ENCODE measurements at regions of chr17 and their contacts with region 1.

Region 1: DNA sequence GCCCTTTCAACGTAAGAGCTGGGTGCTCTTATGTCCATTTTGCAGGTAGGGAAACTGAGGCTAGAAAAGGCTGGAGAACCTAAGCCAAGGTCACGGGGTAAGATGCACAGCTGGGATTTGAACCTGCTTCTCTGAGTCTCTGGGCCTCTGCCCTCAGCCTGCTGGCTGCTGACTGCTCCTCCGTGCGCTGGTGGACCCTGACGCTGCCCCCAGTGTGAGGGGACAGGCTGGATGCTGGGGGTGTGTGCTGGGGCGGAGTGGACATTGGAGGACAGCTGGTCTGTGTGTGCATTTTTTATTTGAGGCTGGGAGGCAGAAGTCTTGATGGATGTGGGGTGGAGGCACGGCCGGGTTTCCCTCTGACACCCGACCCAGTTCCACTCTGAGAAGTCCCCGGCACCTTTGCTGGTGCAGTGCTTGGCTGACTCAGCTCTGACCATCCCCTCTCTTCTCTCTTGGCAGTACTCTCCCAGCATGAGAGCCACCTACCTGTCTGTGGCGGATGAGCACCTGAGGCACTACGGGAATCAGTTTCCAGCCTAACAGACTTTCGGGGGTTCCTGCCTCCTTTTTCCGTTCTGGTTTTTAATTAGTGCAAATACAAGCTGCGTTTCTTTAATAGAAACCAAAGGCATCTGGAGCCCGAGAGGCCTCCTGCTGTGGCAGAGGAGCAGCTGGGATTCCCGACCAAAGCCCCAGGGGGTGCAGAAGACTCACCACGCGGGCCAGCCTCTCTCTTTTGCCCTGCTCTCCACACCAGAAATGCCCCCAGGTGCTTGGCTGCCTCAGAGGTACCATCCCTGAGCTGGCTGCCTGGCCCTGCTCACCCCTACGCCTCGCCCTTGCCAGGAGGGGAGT is 14.1 kb upstream of the DNAI2 start:
- DNase-seq: no peak
- H3K4me3 ChIP-seq: no peak overlapping the region
- CTCF ChIP-seq: no peak

Region 2: DNA sequence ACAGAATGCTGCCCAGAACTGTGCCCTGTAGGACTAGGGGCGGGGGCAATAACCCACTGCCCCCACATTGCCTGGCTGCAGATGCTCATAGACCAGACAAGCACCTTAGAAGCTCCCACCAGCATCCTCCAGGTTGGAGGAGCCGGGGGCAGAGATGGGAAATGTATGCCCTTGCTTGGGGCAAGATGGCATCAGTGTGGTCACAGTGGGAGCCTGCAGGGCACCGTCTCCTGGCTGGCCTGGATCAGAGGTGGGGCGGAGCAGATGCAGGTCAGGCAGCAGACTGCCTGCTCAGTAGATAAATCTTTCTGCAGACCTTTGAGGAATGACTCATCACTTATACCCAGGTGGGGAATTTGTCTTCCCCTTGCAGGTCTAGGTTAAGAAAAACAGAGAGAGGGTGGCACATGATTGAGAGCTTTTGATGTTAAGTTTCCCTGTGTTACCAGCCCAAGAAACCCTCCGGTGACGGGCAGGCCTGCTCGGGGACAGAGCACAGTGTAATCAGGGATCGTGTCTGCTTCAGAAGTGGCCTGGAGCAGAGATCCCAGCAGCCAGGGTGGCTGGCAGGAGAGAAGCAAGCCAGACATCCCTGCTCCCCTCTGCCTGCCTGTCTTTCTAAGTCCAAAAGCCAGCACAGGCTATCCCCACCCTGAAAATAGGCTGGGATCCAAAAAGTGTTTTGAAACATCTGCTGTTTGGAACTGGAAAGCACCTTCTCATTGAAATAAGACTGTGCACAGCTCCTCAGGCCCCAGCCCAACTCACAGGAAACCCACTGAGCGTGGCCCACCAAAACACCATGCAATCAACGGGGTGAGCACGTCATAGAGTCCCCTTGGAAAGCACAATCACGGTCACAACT is 107.1 kb before region 1 on chr17:
- in situ Hi-C with region 1: no loop called
- DNase-seq: no peak
- H3K4me3 ChIP-seq: no peak overlapping the region
- CTCF ChIP-seq: no peak

Region 3: DNA sequence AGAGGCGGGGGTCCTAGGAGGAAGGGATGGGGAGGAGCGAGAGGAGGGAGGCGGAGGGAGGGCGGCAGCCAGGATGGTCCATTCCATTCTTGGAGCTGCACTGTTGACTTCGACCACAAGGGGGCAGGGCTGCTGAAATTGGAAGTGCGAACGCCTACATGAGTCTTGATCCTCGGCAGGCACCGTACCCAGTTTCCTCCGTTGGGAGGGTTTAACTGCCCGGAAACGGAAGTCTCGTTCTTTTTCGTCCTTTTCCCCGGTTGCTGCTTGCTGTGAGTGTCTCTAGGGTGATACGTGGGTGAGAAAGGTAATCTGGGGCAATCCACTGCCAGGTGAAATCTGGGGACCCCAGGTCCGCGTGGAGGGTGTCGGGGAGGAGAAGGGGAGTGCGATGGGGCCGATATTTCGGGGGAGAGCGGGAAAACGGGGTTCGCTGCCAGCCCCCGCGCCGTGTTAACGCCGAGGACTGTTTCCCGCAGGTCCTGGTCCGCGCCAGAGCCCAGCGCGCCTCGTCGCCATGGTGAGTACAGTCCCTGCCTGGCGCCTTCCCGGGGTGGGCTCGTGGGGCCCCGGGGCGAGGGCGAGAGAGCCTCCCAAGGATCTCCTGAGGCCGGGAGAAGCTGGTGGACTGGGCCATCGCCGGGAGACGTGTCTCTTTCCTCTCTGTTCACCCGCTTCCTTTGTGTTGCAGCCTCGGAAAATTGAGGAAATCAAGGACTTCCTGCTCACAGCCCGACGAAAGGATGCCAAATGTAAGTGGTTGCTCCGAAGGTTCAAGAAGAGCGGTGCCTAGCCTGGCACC is 56.3 kb before region 1 on chr17 and contains the start of gene RPL38:
- in situ Hi-C with region 1: no loop called
- DNase-seq: peak; percentile 97
- H3K4me3 ChIP-seq: peak within 1 kb of the TSS; percentile 97
- CTCF ChIP-seq: peak; percentile 95

Region 4: GRCh38 chr17:74303305-74303704 is 43.4 kb after region 1 on chr17:
- in situ Hi-C with region 1: loop called (anchors 5 kb)
- DNase-seq: no peak
- H3K4me3 ChIP-seq: no peak overlapping the region
- CTCF ChIP-seq: no peak